CD8-positive, alpha-beta memory T cell (primary cell): ENCODE measurements at regions of chr10 and their contacts with region 1.

Region 1: DNA sequence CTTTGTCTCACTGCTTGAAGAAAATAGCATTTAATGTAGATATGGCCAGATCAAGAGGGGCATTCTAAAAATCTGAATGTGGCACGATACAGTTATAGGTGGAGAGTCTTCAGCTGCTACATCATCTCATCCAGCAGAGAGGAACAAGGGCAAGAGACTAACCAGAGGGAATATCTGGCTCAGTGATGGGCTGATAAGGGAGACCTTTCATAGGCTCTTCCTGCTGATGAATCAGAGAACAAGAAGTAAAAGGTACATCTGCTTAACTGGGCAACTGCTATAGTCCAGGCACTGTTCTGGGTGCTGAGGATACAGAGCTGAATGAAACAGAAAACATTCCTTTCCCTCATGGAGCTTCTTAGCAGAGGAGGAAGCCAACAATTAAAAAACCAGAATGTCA is 37.9 kb downstream of the PIP4K2A start:
- DNase-seq: no peak
- H3K4me3 ChIP-seq: peak overlapping the region; percentile 14
- H3K4me3 Mint-ChIP-seq: peak overlapping the region; percentile 34 to 90 (median 60)
- H3K27ac ChIP-seq: no peak overlapping the region
- H3K27ac Mint-ChIP-seq: peak overlapping the region; percentile 82 to 98 (median 92)
- H3K4me1 ChIP-seq: peaks cover 94% of the 10 kb centered on the region
- H3K4me1 Mint-ChIP-seq: peaks cover 92 to 100% (median 99%) of the 10 kb centered on the region in 3 donors
- H3K27me3 ChIP-seq: no peaks in the 10 kb centered on the region
- H3K27me3 Mint-ChIP-seq: no peaks in the 10 kb centered on the region

Region 2: DNA sequence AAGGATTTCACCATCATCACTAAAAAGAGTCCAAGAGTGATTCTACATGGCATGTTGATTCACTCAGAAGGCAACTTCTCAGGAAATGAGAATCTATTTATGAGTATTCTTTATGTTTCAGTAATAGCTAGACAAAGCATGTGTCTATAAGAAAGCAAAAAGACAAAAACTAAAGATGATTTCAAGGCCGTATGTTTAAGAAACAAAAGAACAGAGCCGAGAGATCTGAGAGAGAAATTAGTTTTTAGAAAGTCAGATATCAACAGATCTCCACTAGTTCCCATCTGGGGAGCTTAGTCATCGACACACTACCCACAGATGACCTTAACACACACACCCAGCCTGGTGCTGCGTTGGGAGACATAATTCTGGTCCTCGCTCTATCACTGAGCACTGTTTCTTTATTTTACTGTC is 16.9 kb after region 1 on chr10:
- CTCF ChIA-PET with region 1: no interaction called
- POLR2A ChIA-PET with region 1: interaction called, 15 read pairs
- DNase-seq: no peak
- H3K4me3 ChIP-seq: no peak overlapping the region
- H3K4me3 Mint-ChIP-seq: peak overlapping the region; percentile 17 to 79 (median 69)
- H3K27ac ChIP-seq: peak overlapping the region; percentile 3
- H3K27ac Mint-ChIP-seq: peak overlapping the region; percentile 79 to 98 (median 91)
- H3K4me1 ChIP-seq: peaks cover 93% of the 10 kb centered on the region
- H3K4me1 Mint-ChIP-seq: peaks cover 95 to 98% (median 98%) of the 10 kb centered on the region in 3 donors
- H3K27me3 ChIP-seq: no peaks in the 10 kb centered on the region
- H3K27me3 Mint-ChIP-seq: no peaks in the 10 kb centered on the region